Head of caudate nucleus (tissue), 42 donors: ENCODE measurements at regions of chr10 and their contacts with region 1.

Region 1: DNA sequence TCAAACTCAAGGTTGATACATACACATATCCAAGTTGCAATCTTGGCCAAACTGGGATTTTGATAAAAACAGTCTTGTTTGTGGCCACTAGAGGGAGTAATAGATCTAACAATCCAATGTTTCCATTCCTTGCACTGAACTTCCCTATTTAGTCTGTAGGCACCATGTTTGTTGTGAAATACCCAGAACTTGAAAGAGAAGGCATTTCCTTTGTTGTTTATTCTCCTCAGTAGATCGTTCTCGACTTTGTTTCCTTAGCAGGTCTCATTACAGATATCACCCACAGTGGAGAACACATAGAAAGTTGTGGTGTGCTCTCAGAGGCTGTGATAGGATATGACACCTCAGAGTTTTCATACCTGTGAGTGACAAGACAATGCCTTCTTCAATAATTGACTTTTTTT is 70.3 kb upstream of the MXI1 start:
- DNase-seq: peak in 7 of 42 donors; percentile 15 to 69 (median 26)

Region 2: DNA sequence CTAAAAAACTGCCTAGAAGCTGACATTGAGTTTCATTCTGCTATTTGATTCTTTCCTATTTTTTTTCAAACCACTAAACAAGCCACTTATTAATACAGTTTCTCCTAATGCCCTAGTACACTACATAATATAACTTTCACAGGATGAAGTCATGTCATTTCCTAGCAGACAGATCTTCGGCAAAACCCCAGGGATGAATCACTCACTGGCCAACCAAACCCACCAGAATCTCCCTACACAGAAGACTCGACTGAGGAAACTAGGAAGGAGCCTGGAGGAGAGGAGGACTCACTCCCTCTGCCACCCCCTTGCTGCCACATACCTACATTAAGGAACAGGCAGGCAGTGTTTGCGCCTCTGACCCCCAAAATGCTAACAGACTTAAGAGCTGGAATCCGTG is 247.3 kb before region 1 on chr10:
- intact Hi-C with region 1: loop called (anchors 5 kb)
- DNase-seq: no peak

Region 3: DNA sequence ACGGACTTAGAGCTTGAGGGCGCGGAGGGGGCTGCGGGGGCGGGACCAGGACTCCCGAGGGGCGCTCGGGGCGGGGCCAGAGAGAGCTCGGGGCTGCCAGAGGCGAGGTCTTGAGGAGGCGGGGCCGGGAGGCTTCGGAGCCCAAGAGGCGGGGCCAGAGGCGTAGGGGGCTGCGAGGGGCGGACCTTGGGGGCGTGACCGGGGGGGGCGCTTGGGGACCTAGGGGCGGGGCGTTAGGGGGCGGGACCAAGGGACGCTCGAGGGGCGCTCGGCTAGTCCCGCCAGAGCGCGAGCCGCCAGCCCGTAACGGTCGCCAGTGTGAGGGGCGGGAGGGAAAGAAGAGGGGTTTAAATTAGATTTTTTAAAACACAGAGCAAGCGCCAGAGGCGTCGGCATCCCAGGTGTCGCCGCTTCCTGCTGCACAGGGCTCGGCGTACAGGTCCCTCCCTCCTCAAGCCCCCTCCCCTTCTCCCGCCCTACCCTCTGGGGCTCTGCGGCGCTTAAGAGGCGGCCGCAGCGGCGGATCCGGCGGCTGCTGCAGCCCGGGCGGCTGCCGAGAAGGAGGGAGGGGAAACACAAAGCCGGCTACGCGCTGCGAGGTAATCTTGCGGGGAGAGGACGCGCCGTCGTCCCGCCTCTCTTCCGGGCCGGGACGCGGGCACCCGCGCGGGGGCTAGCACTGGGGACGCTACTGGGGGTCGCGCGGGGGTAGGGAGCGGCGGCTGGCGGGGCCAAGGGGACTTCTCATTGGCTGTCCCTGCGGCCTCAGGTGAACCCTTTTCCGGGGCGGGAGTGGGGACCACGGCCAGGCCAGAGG is 129.2 kb before region 1 on chr10 and contains the start of gene ADD3:
- intact Hi-C with region 1: loop called (anchors 10 kb)
- DNase-seq: peak; percentile 90 to 99 (median 97)

Region 4: DNA sequence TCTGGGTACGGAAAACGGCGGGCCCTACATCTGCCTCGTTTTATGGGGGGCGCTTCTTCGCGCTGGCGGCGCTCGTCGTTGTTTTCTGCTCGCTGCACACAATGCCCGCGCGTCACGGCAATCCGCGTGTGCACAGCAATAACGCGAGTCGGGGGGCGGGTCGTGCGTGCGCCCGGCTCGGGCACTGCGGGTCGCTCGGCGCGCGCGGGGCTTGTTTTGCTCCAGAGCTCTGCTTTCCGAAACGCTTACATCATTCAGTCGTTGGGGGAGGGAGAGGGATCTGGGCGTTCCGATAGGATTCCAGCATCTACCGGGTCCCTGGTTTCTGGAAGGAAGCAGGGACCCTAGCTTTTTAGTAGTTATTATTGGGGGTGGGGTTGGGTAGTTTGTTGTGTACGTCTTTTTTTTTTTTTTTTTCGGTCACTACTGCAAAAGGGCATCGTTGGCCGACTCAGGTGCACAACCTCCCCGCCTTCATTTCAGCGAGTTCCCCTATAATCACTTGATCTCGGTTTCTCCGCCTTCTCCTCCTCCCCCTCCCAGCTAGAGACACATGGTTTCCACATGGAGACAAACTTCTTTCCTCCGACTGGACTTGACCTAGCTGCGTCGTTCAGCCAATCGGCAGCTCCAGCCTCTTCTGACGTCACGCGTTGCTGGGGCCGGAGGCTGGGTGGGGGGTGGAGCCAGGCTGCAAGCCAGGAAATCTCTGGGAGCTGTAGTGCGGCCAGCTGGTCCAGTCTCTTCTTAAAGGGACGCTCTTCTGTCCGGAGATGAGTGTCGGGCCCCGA is 73.7 kb after region 1 on chr10:
- intact Hi-C with region 1: loop called (anchors 5 kb)
- DNase-seq: peak; percentile 96 to 100 (median 99)

Region 5: DNA sequence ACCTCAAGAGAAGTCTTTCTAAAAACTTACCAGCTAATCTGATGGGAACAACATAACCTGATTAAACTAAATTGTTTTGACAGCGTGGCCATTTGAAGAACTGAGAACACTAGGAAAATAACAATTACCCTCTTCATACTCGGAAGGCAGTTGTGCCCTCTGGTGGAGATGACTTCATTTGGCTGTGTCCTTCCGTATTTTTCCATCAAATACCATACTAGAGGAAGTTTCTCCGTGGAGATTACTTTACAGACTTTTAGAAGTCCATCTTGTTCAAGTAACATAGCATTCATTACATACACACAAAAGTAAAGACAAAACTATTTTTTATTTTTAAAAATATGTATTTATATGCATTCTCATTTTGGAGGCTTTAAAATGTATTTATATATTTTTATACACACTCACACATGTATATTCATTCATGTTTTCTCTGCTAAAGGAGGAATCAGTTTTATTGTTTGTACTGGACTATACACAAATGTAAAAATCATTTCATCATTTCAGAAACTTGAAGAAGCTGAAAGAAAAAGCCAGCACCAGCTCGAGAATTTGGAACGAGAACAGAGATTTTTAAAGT is 142.4 kb after region 1 on chr10:
- intact Hi-C with region 1: loop called (anchors 5 kb)
- DNase-seq: peak in 39 of 42 donors; percentile 12 to 86 (median 71)

Region 6: GRCh38 chr10:110304780-110305421 is 167.8 kb after region 1 on chr10 and contains the start of gene SMNDC1:
- intact Hi-C with region 1: loop called (anchors 10 kb)
- DNase-seq: peak; percentile 95 to 99 (median 98)

Region 7: DNA sequence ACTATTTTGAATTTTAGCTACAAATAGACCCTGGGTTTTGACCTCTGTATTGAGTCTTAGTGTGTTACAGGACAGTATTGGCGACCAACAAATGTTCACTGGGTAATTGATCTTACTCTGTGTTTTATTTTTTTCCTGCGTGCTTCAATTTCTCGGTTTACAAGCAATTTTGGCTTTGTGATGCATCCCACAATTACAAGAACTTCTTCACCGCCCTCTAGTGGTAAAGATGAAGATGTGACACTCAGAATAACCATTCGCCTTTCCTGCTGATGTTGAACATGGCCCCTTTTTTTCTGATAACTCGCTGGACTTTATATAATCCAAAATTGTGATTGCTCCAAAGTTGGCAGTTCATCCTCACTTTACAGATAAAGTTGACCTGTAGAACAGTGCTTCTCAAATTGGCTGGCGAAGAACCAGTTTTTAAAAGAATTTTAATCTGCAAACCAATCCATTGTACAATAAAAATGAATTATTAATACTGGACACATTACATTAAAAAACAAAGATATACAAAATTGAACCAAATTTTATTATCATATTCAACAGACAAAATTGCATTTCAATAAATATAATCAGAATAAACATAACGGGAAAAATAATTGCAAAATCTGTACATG is 410.1 kb after region 1 on chr10:
- intact Hi-C with region 1: loop called (anchors 5 kb)
- DNase-seq: peak in 1 of 42 donors; percentile 55